ENCODE measurements at regions of chr13 and their contacts with region 1.

Region 1: GRCh38 chr13:67230404-67231288 is 510 bp upstream of the PCDH9 start:
- DNase-seq: peak; percentile 96
- ATAC-seq: peak; percentile 97

Region 2: GRCh38 chr13:65656740-65657329 is 1573.8 kb before region 1 on chr13:
- intact Hi-C with region 1: loop called (anchors 5 kb)
- DNase-seq: no peak
- ATAC-seq: no peak

Region 3: DNA sequence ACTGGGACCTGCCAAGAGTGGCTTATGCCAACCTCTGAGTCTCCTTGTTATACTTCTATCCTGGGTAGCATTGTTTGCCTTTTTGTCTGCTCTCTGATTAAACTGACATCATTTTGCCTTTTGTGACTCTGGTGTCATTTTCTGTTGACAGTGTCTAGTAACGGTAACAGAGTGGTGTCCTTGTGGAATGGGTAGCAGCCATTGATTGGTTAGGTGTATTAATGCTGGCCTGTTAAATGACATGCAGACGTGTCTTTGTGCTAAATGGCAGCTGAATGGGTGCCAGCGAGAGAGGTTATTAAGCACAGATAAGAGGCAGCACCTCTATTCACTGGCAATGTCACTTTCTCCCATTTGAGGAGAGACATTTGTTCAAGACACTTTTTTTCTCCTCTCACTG is 1289.9 kb before region 1 on chr13:
- intact Hi-C with region 1: loop called (anchors 2 kb)
- DNase-seq: peak; percentile 37
- ATAC-seq: peak; percentile 82

Region 4: GRCh38 chr13:67134417-67135129 is 96.1 kb before region 1 on chr13:
- intact Hi-C with region 1: loop called (anchors 5 kb)
- DNase-seq: no peak
- ATAC-seq: peak; percentile 56

Region 5: DNA sequence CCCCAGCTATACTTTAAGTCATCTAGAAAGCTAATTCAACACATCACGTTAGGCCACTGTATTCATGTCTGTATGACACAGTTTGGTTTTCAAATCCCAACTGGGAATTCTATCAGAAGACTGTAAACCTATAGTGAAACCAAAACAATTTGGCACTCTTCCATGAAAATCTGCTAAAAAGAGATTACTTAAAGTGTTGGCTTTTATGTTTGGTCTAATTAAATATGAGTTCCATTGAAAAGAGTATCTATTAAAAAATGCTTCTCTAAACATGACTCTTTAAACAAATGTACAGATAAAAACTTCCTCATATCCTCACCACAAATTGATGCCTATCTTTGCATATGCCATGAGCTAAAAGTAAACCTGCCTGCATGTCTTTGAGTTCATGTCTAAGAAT is 25.9 kb before region 1 on chr13:
- intact Hi-C with region 1: no loop called
- DNase-seq: no peak
- ATAC-seq: no peak